ENCODE measurements at regions of chr12 and their contacts with region 1.

Region 1: GRCh38 chr12:109573029-109573913 is at the starts of genes MMAB and MVK:
- DNase-seq: peak; percentile 99
- ATAC-seq: peak; percentile 97
- H3K4me3 Mint-ChIP-seq: peak within 1 kb of the TSS; percentile 90
- H3K27ac Mint-ChIP-seq: peak within 1 kb of the TSS; percentile 96
- H3K4me1 Mint-ChIP-seq: peaks cover 23% of the 10 kb centered on the region
- H3K27me3 Mint-ChIP-seq: no peaks in the 10 kb centered on the region
- total RNA-seq, gene MMAB: 37.7 to 44.3 TPM
- total RNA-seq, gene MVK: 17.8 to 18.7 TPM

Region 2: DNA sequence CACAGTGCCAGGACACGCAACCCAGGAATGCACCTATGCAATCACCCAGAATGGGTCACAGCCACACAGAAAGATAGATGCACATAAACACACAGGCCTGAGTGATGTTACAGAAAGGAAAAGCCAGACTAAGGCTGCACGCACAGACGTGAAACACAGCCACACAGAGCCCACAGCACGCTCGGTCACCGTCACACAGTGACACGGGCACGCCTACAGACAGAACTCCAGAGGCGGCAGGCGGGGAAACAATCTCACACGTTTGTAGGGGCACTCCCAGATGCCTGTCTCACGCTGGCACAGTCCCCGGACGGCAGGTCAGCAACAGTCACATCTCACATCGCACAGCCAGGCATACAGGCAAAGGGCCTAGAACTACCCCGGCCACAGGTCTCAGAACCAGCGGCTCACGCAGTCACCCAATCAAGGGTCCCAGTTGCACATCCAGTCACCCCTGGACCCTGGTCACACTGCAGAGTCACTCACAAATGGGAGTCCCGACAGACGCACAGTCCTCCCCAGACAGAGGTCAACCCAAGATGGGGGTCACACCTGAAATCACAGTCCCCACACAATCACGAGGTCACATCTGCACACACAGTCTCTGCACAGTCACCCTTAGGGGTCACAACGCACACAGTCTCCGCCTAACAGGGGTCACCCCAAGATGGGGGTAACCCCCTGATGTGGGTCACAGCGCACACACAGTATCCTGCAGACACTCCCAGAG is 716.7 kb before region 1 on chr12:
- CTCF ChIA-PET with region 1: no interaction called
- POLR2A ChIA-PET with region 1: no interaction called
- intact Hi-C with region 1: loop called in 1 of 2 experiments (anchors 5 kb)
- DNase-seq: peak; percentile 81
- ATAC-seq: peak; percentile 64
- H3K4me3 Mint-ChIP-seq: peak overlapping the region; percentile 82
- H3K27ac Mint-ChIP-seq: peak overlapping the region; percentile 86
- H3K4me1 Mint-ChIP-seq: peaks cover 43% of the 10 kb centered on the region
- H3K27me3 Mint-ChIP-seq: peaks cover 2% of the 10 kb centered on the region

Region 3: DNA sequence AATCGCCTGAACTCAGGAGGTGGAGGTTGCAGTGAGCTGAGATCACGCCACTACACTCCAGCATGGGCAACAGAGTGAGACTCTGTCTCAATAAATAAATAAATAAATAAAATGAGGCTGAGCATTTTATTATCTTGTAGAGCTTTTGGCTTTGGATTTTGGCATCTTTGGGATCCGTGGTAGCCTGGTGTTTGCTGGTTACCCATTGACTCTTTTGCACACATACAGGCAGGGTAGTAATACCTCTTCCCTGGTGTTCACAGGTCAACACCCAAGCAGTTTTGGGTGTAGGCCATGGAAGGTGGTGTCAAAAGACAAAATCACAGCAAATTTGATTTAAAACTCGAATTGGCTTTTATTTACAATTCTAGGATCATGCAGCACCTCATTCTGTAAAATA is 429.0 kb before region 1 on chr12:
- CTCF ChIA-PET with region 1: no interaction called
- POLR2A ChIA-PET with region 1: no interaction called
- intact Hi-C with region 1: no loop called
- DNase-seq: no peak
- ATAC-seq: no peak
- H3K4me3 Mint-ChIP-seq: no peak overlapping the region
- H3K27ac Mint-ChIP-seq: no peak overlapping the region
- H3K4me1 Mint-ChIP-seq: peaks cover 7% of the 10 kb centered on the region
- H3K27me3 Mint-ChIP-seq: no peaks in the 10 kb centered on the region

Region 4: GRCh38 chr12:109154451-109155438 is 418.5 kb before region 1 on chr12:
- CTCF ChIA-PET with region 1: no interaction called
- POLR2A ChIA-PET with region 1: no interaction called
- intact Hi-C with region 1: loop called in 1 of 2 experiments (anchors 2 kb)
- DNase-seq: peak; percentile 93
- ATAC-seq: peak; percentile 94
- H3K4me3 Mint-ChIP-seq: peak overlapping the region; percentile 82
- H3K27ac Mint-ChIP-seq: peak overlapping the region; percentile 85
- H3K4me1 Mint-ChIP-seq: peaks cover 17% of the 10 kb centered on the region
- H3K27me3 Mint-ChIP-seq: peaks cover 1% of the 10 kb centered on the region

Region 5: GRCh38 chr12:109597795-109598427 is 24.6 kb after region 1 on chr12:
- CTCF ChIA-PET with region 1: interaction called, 15 read pairs
- POLR2A ChIA-PET with region 1: no interaction called
- intact Hi-C with region 1: no loop called
- DNase-seq: peak; percentile 80
- ATAC-seq: peak; percentile 51
- H3K4me3 Mint-ChIP-seq: no peak overlapping the region
- H3K27ac Mint-ChIP-seq: no peak overlapping the region
- H3K4me1 Mint-ChIP-seq: peaks cover 31% of the 10 kb centered on the region
- H3K27me3 Mint-ChIP-seq: no peaks in the 10 kb centered on the region

Region 6: DNA sequence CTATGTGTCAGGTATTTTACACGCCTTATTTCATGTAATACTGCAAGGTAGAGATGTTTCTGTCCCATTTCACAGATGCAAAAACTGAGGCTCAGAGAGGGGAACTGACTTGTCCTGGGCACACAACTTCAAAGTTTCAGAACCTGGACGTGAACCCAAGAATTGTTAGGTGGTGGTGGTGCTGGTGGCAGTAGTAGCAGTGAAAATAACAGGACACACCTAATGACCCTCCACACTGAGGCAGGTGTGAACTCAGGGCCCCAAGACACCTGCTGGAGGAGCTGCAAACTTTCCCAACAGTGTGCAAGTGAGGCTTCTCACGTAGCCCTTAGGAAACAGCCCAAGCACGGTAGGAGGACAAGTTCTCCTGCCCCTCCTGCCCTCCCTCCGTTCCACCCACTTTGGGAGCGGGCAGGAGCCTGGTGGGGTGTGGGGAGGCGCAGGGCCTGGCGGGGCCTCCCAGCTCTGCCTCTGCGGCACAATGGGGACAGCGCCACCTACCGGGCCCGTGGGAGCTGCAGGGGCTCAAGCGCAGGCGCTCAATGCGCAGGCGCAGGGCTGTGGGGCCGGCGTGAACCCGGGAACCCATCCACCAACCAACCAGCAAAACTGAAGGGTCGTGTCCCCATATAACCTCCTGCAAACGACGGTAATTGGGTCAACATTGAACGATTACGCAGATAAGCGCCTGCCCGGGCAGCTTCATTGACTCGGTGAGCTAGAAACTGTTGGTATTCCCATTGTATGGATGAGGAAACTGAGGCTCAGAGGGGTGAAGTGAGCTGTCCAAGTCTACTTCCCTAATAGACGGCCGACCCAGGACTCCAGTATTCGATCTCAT is 271.9 kb after region 1 on chr12:
- CTCF ChIA-PET with region 1: no interaction called
- POLR2A ChIA-PET with region 1: no interaction called
- intact Hi-C with region 1: loop called in 1 of 2 experiments (anchors 1 kb)
- DNase-seq: peak; percentile 95
- ATAC-seq: peak; percentile 99
- H3K4me3 Mint-ChIP-seq: peak overlapping the region; percentile 21
- H3K27ac Mint-ChIP-seq: no peak overlapping the region
- H3K4me1 Mint-ChIP-seq: peaks cover 4% of the 10 kb centered on the region
- H3K27me3 Mint-ChIP-seq: no peaks in the 10 kb centered on the region

Region 7: GRCh38 chr12:110124184-110124995 is 551.1 kb after region 1 on chr12 and contains the start of gene IFT81:
- CTCF ChIA-PET with region 1: no interaction called
- POLR2A ChIA-PET with region 1: no interaction called
- intact Hi-C with region 1: loop called in 1 of 2 experiments (anchors 1 kb)
- DNase-seq: peak; percentile 98
- ATAC-seq: peak; percentile 91
- H3K4me3 Mint-ChIP-seq: peak within 1 kb of the TSS; percentile 83
- H3K27ac Mint-ChIP-seq: peak within 1 kb of the TSS; percentile 81
- H3K4me1 Mint-ChIP-seq: peaks cover 7% of the 10 kb centered on the region
- H3K27me3 Mint-ChIP-seq: peaks cover 4% of the 10 kb centered on the region
- total RNA-seq, gene IFT81: 3.5 TPM